Mammary epithelial cell (primary cell): ENCODE measurements at regions of chr1 and their contacts with region 1.

Region 1: DNA sequence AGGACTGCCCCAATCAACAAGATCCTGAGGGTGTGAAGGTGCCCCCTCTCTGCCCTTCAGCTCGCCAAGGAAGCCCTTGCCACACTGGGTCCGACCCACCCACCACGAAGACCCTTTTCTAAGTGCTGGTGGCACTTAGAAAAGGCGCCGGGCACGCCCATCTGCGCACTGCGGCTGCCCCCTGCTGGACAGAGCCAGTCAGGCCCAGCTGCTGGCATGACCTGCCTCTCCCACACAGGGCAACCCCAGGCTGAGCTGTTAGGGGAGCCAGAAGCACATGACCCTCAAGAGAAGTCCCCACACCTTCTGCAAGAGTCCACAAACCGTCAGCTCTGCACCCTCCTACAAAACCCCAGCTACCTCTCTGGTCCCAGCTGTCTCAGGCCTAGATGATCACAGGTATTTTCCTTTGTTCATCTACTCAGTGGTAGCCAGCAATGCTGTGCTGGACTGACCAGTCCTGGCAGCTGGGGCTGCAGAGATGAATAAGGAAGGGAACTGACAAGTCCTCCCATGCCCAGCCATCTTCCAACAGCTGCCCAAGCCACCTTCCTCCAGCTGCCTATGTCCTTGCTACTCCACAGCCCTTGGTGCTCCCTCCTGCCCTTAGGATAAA is 40.0 kb upstream of the ZC3H12A start:
- DNase-seq: no peak
- H3K4me3 ChIP-seq: no peak overlapping the region
- H3K27ac ChIP-seq: no peak overlapping the region
- H3K4me1 ChIP-seq: no peaks in the 10 kb centered on the region
- H3K27me3 ChIP-seq: no peaks in the 10 kb centered on the region
- CTCF ChIP-seq: peak; percentile 87 to 96

Region 2: DNA sequence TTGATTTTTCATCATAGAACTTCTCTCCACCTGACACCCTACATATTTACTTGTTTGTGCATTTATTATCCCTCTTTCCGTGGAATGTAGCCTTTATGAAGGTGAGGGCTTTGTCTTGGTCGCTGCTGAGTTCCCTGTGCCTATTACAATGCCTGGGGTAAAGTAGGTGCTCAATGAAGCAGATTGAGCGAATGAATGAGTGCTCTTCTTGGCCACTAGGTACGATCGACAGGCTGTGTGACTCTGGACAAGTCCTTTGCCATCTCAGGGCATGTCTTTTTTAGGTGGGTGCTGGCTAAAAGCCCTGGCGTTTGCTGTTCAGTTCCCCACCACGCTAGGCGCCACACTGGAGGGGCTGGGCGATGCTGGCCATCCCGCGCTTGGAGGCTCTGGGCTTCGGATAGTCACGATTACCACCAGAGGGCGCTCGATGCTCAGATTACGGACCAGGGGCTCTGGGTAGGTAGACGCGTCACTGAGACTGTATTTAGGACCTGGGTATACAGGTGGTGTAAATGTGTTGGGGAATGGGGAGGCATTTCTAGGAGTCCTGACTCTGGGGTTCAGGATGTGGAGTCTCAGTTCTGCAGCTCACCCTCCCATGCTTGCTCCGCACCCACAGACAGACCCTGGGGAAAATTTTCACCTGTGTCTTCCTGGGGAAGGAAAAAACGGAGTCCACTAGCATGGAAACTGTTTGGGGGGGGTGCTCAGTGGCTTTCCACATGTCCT is 880.6 kb before region 1 on chr1:
- CTCF ChIA-PET with region 1: no interaction called
- dilution Hi-C with region 1: no loop called
- in situ Hi-C with region 1: loop called in 1 of 2 experiments (anchors 25 kb)
- intact Hi-C with region 1: loop called (anchors 2 kb)
- DNase-seq: peak; percentile 41
- H3K4me3 ChIP-seq: no peak overlapping the region
- H3K27ac ChIP-seq: no peak overlapping the region
- H3K4me1 ChIP-seq: no peaks in the 10 kb centered on the region
- H3K27me3 ChIP-seq: no peaks in the 10 kb centered on the region
- CTCF ChIP-seq: peak; percentile 65 to 79

Region 3: GRCh38 chr1:36576118-36576517 is 858.3 kb before region 1 on chr1:
- CTCF ChIA-PET with region 1: interaction called, 3 read pairs
- dilution Hi-C with region 1: no loop called
- in situ Hi-C with region 1: loop called (anchors 25 kb)
- intact Hi-C with region 1: loop called (anchors 1 kb)
- DNase-seq: peak; percentile 12
- H3K4me3 ChIP-seq: no peak overlapping the region
- H3K27ac ChIP-seq: no peak overlapping the region
- H3K4me1 ChIP-seq: no peaks in the 10 kb centered on the region
- H3K27me3 ChIP-seq: no peaks in the 10 kb centered on the region
- CTCF ChIP-seq: peak; percentile 79 to 95

Region 4: GRCh38 chr1:36609241-36610027 is 825.0 kb before region 1 on chr1:
- CTCF ChIA-PET with region 1: no interaction called
- dilution Hi-C with region 1: no loop called
- in situ Hi-C with region 1: no loop called
- intact Hi-C with region 1: loop called (anchors 2 kb)
- DNase-seq: peak; percentile 48
- H3K4me3 ChIP-seq: no peak overlapping the region
- H3K27ac ChIP-seq: no peak overlapping the region
- H3K4me1 ChIP-seq: no peaks in the 10 kb centered on the region
- H3K27me3 ChIP-seq: no peaks in the 10 kb centered on the region
- CTCF ChIP-seq: peak; percentile 80 to 87

Region 5: DNA sequence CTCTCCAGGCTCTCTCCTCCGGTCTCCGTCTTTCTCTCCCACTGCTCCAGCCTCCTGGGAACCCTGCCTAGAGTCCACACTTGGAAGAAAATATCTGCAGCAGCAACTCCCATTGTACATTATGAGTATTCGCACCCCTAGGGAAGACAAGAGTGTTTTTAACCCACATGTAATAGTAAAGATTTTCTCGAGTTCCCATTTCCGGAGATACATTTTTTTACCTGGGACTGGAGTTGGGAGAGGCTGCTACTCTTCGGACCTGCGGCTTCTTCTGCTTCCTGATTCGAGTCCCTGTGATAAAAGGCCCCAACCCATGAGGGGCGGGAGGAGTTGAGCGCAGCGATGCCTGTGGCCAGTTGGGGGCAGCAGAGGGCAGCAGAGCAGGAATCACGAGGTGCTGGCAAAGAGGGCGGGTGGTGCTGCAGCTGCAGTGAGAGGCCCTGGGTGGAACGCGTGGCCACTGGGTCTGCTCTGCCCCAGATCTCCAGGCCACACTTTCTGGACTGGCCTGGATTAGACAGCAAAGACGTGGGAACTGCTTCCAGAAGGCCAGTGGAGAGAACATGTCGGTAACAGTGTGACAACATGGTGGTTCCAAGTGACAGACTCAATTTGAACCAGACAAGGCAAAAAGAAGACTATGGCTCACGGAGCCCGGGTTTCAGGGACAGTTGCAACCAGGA is 730.7 kb before region 1 on chr1:
- CTCF ChIA-PET with region 1: no interaction called
- dilution Hi-C with region 1: no loop called
- in situ Hi-C with region 1: no loop called
- intact Hi-C with region 1: loop called (anchors 1 kb)
- DNase-seq: peak; percentile 37
- H3K4me3 ChIP-seq: no peak overlapping the region
- H3K27ac ChIP-seq: no peak overlapping the region
- H3K4me1 ChIP-seq: no peaks in the 10 kb centered on the region
- H3K27me3 ChIP-seq: peaks cover 2% of the 10 kb centered on the region
- CTCF ChIP-seq: peak; percentile 87 to 90